ENCODE measurements at regions of chr11 and their contacts with region 1.

Region 1: DNA sequence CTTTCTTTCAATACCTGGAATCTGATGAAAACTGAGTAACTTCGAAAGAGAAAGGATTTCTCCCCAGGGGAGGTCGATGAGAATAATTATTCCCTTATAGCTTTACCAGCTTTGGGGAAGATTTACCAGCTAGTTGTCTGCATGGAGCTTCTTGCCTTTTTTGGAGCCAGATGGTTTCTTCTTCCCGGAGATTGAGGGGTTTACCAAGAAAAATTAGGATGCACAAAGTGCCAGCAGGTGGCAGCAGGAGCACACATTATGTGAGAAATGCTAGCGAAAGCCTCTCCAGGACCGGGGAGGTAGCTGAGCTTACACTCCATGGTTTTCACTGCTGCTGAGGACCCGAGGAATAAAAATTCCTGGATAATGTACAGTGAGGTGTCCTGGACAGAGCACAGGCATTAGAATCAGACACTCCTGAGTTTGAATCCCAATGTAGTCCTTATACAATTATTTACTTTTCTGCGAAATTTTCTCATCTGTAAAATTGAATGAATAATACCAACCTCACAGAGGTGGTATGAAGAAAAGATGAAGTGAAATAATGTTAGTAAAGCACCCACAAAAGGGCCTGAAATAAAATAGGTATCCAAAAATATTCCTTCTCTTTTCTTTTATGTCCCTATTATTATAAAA is 46.0 kb upstream of the PARVA start:
- DNase-seq: peak; percentile 78
- H3K4me3 Mint-ChIP-seq: no peak overlapping the region
- H3K27ac Mint-ChIP-seq: no peak overlapping the region
- H3K4me1 Mint-ChIP-seq: peaks cover 18% of the 10 kb centered on the region
- H3K27me3 Mint-ChIP-seq: no peaks in the 10 kb centered on the region
- CTCF ChIP-seq: peak; percentile 76

Region 2: GRCh38 chr11:12087075-12088004 is 244.0 kb before region 1 on chr11:
- CTCF ChIA-PET with region 1: no interaction called
- intact Hi-C with region 1: no loop called
- DNase-seq: peak; percentile 55
- H3K4me3 Mint-ChIP-seq: peak overlapping the region; percentile 21
- H3K27ac Mint-ChIP-seq: peak overlapping the region; percentile 99
- H3K4me1 Mint-ChIP-seq: peaks cover 75% of the 10 kb centered on the region
- H3K27me3 Mint-ChIP-seq: no peaks in the 10 kb centered on the region
- CTCF ChIP-seq: no peak

Region 3: GRCh38 chr11:12288212-12288930 is 43.0 kb before region 1 on chr11:
- CTCF ChIA-PET with region 1: interaction called, 11 read pairs
- intact Hi-C with region 1: no loop called
- DNase-seq: peak; percentile 88
- H3K4me3 Mint-ChIP-seq: peak overlapping the region; percentile 29
- H3K27ac Mint-ChIP-seq: peak overlapping the region; percentile 85
- H3K4me1 Mint-ChIP-seq: peaks cover 42% of the 10 kb centered on the region
- H3K27me3 Mint-ChIP-seq: no peaks in the 10 kb centered on the region
- CTCF ChIP-seq: peak; percentile 92

Region 4: GRCh38 chr11:12318791-12319438 is 12.4 kb before region 1 on chr11:
- CTCF ChIA-PET with region 1: no interaction called
- intact Hi-C with region 1: no loop called
- DNase-seq: no peak
- H3K4me3 Mint-ChIP-seq: no peak overlapping the region
- H3K27ac Mint-ChIP-seq: no peak overlapping the region
- H3K4me1 Mint-ChIP-seq: no peaks in the 10 kb centered on the region
- H3K27me3 Mint-ChIP-seq: no peaks in the 10 kb centered on the region
- CTCF ChIP-seq: no peak

Region 5: DNA sequence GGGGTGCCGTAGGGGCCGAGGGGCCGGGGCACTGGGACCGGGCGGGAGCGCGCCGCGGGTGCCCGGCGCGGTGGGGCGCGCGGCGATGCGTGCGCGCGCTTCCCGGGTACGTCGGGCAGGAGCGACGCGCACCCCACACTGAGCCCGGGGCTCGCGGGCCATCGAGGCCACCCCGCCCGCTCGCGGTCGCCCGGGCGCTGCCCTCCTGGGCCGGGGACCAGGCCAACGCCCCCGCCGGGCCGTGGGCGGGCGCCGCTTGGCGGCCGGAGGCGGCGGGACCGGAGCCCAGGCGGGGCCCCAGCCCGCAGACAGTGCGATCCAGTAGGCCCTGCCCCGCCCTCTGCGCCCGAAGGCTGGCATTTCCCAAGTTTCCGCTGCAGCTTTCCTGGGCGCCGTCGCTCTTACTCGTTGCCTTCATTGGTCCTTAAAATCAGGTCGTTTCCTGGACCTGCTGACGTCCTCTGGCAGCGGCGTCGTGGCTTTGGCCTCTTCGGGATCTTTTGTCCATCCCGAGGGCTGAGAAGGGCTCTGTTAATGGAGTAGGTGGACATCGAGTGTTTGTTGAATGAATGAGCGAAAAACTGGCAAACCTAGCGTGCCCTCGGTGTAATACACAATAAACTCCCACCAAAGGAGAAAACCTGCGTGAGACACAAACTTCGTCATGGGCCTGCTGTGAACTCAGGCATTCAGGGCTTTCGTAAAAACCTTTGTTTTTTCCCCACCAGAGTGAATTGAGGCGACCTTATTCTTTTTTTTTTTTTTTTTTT is 46.7 kb after region 1 on chr11:
- CTCF ChIA-PET with region 1: interaction called, 12 read pairs
- intact Hi-C with region 1: loop called (anchors 1 kb)
- DNase-seq: peak; percentile 82
- H3K4me3 Mint-ChIP-seq: peak overlapping the region; percentile 89
- H3K27ac Mint-ChIP-seq: peak overlapping the region; percentile 96
- H3K4me1 Mint-ChIP-seq: peaks cover 11% of the 10 kb centered on the region
- H3K27me3 Mint-ChIP-seq: no peaks in the 10 kb centered on the region
- CTCF ChIP-seq: peak; percentile 32

Region 6: GRCh38 chr11:12485328-12485727 is 154.0 kb after region 1 on chr11:
- CTCF ChIA-PET with region 1: interaction called, 6 read pairs
- intact Hi-C with region 1: loop called (anchors 5 kb)
- DNase-seq: no peak
- H3K4me3 Mint-ChIP-seq: no peak overlapping the region
- H3K27ac Mint-ChIP-seq: no peak overlapping the region
- H3K4me1 Mint-ChIP-seq: no peaks in the 10 kb centered on the region
- H3K27me3 Mint-ChIP-seq: no peaks in the 10 kb centered on the region
- CTCF ChIP-seq: peak; percentile 61

Region 7: GRCh38 chr11:12942157-12942556 is 610.8 kb after region 1 on chr11:
- CTCF ChIA-PET with region 1: no interaction called
- intact Hi-C with region 1: loop called (anchors 10 kb)
- DNase-seq: no peak
- H3K4me3 Mint-ChIP-seq: no peak overlapping the region
- H3K27ac Mint-ChIP-seq: no peak overlapping the region
- H3K4me1 Mint-ChIP-seq: no peaks in the 10 kb centered on the region
- H3K27me3 Mint-ChIP-seq: no peaks in the 10 kb centered on the region
- CTCF ChIP-seq: no peak

Measured in Calu3 (cell line).